ENCODE measurements at regions of chr11 and their contacts with region 1.

Region 1: DNA sequence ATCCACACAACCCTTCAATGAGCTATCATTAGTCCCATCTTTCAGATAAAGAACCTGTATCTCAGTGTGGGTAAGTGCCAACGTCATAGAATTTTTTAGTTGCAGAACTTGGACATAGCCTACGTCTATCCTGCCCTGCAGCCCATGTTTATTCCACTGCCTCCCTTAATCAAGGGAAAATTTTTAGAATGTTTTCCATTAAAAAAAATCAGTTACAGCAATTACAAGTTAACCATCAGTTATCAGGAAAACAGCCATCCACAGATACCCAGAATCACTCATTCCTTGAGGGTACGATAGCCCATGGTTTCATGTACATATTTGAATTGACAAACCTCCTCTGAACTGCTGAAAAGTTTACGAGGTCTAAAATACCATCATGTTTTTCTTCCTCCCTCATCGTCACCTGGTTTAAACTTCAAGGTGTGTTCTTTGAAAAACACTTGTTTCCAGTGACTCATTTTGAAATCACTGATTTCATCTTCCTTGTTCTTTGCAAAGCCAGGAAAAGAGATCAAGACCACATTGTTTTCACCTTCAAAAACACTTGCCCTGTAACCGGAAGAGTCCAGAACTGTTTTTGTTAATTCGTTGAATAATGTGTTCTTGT is 100.9 kb downstream of the FAM76B start:
- DNase-seq: peak; percentile 83
- H3K4me3 Mint-ChIP-seq: no peak overlapping the region
- H3K27ac Mint-ChIP-seq: no peak overlapping the region
- H3K4me1 Mint-ChIP-seq: peaks cover 27% of the 10 kb centered on the region
- H3K27me3 Mint-ChIP-seq: no peaks in the 10 kb centered on the region

Region 2: GRCh38 chr11:95599959-95600586 is 88.6 kb before region 1 on chr11:
- intact Hi-C with region 1: loop called (anchors 5 kb)
- DNase-seq: peak; percentile 66
- H3K4me3 Mint-ChIP-seq: no peak overlapping the region
- H3K27ac Mint-ChIP-seq: peak overlapping the region; percentile 35
- H3K4me1 Mint-ChIP-seq: peaks cover 19% of the 10 kb centered on the region
- H3K27me3 Mint-ChIP-seq: no peaks in the 10 kb centered on the region

Region 3: DNA sequence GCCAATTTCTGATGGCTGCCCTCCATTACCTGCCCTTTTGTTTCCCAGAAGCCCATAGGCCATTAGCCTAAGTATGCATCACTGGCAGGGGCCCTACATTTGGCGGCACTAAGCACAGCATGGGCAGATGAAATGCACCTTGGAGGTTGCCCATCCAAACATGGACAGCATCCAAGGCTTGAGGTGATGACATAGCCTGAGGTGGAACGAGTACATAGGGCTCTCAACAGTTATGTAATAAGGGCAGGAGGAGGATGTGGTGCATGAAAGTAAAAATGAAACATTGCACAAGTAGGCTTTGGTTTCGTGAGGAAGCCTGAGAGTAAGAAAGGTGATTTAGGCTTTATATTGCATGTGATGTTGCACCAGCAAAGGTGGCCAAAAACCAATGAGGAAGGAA is 47.2 kb before region 1 on chr11:
- intact Hi-C with region 1: loop called (anchors 5 kb)
- DNase-seq: peak; percentile 84
- H3K4me3 Mint-ChIP-seq: no peak overlapping the region
- H3K27ac Mint-ChIP-seq: peak overlapping the region; percentile 55
- H3K4me1 Mint-ChIP-seq: peaks cover 17% of the 10 kb centered on the region
- H3K27me3 Mint-ChIP-seq: no peaks in the 10 kb centered on the region

Region 4: DNA sequence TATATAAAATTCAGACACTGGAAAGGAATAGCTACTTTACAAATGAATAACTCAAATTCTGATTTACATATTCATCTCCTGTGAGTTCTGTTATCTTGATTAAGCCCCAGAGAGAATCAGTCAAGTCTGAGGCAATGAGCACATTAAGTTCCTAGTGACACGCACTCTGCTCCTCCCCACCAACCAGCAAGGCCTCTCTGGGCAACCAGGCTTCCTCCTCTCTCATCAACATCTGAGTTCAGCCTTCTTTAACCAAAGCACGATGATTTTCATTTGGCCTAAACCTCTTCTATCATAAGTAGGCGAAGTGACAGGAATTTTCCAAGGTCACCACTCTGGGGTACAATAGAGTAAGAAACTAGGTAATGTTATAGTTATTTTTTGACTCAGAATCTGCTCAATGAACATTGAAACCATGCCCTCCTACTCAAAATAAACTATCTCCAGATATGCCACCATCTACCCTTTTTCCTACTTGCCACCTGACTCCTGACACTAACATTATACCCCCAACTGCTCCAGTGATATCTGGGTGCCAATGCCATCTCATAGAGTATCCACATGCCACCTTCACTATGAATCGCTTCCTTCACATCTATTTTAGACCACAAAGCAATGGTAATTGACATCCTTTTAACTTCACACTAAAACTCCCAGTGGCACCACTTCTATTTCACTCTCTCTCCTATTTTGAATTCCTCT is 13.9 kb before region 1 on chr11:
- intact Hi-C with region 1: loop called (anchors 1 kb)
- DNase-seq: no peak
- H3K4me3 Mint-ChIP-seq: no peak overlapping the region
- H3K27ac Mint-ChIP-seq: peak overlapping the region; percentile 87
- H3K4me1 Mint-ChIP-seq: peaks cover 41% of the 10 kb centered on the region
- H3K27me3 Mint-ChIP-seq: no peaks in the 10 kb centered on the region

Region 5: DNA sequence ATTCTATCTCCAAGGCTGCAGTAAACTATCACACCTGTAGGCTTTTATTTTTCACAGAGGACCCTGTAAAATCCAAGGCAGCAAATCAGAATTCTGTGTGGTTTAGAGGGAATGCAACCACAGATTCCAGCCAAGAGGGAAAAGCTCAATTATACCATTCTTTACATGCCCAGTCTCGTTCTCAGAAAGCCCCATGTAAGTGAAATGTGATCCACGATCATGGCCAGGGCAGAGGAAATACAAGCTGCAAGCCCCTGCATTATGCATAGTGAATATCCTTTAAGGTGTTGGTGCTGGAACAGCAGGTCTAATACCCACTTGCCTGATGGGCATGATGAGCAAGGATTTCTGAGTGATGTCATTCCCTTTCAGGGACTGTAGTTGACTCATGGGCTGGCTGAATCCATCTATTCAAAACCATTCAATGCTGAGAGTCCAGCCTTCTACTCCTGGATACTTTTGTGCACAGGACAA is 434.0 kb after region 1 on chr11:
- intact Hi-C with region 1: no loop called
- DNase-seq: no peak
- H3K4me3 Mint-ChIP-seq: no peak overlapping the region
- H3K27ac Mint-ChIP-seq: no peak overlapping the region
- H3K4me1 Mint-ChIP-seq: peaks cover 18% of the 10 kb centered on the region
- H3K27me3 Mint-ChIP-seq: no peaks in the 10 kb centered on the region